Activated naive CD4-positive, alpha-beta T cell treated with anti-CD3 and anti-CD28 coated beads, Interleukin-2, amount 10 ng/mL, durations not matched to agents 7 days and 5 days (primary cell): ENCODE measurements at regions of chr16 and their contacts with region 1.

Region 1: DNA sequence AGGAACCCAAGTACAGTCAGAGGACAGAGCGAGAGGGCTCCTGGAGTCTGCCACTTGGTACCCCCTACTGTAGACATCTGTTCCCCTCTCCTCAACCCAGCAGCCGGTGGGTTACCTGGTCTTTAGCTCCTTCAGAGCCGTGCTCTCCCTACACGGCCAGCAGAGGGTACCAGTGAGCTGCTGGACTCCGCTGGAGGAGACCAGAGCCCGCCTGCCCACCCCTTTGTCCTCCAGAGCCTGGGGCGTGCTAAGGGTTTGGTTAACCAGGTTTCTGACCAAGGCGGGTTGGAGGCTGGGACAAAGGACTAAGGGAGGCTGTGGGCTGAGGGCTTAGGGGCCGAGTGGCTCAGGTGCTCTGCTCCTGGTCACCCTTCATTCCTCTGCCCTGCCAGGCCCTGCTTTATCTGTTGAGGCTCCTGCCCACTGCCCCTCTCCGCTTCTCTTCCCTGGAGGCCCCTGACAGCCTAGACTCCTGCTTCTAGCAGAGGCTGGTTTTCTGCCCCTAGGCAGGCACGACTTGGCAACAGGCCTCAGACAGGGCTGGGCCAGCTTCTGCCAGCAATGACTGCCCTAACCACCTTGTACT is 2.7 kb upstream of the HSD11B2 start:
- DNase-seq: peak; percentile 75
- H3K4me3 Mint-ChIP-seq: no peak overlapping the region
- H3K27ac Mint-ChIP-seq: no peak overlapping the region
- H3K4me1 Mint-ChIP-seq: peaks cover 10% of the 10 kb centered on the region
- H3K27me3 Mint-ChIP-seq: peaks cover 94% of the 10 kb centered on the region

Region 2: DNA sequence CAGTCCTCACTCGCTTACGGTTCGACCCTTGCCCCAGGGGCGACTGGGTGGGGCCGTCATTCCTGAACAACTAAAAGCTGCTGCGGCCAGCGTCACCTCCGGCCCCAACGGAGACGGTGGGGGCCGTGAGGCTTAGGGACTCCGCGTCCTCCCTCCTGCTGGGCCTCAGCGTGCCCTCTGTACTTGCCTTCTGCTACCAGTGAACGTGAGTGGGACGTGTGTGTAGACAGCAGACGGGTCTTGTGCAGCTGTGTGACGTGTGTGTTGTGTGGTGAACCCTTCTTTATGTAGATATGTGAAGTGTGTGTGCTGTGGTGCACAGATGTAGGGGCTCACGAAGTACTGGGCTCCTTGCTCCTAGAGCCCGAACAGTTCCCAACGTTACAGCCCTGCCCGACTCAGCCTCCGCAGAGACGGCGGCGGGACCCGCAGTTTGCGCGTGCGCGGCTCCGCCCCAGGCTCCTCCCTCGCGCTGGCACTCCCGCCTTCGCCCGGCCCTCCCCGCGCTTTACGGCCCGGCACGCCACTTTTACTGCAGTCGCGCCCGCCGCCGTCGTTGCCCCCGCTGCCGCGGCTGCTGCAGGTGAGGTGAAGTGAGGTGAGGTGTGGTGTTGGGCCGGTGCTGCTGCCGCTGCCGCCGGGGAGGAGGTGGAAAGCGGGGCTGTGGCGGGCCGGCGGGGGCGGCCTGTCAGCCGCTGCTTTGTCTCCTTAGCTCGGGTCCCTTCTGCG is 318.7 kb before region 1 on chr16 and contains the start of gene PHAF1:
- CTCF ChIA-PET with region 1: no interaction called
- DNase-seq: peak; percentile 96
- H3K4me3 Mint-ChIP-seq: peak within 1 kb of the TSS; percentile 96
- H3K27ac Mint-ChIP-seq: peak within 1 kb of the TSS; percentile 85
- H3K4me1 Mint-ChIP-seq: peaks cover 36% of the 10 kb centered on the region
- H3K27me3 Mint-ChIP-seq: peaks cover 3% of the 10 kb centered on the region

Region 3: DNA sequence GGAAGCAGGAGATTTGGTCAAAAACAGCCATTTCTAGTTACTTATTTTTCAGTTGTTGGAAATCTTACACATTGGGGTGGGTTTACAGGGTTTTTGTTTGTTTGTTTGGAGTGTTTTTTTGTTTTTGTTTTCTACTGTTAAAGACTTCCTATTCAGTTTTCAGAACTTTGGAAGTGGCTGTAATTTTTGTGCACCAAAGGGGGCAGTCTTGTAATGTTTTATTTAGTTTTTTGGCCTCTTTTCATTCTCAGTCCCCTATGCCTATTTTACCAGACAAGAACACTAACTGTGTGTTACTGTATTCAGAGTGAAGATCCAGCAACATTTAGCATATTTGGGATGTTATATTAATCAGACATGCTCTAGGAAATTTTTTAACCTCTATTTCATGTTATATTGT is 55.6 kb before region 1 on chr16:
- CTCF ChIA-PET with region 1: no interaction called
- DNase-seq: no peak
- H3K4me3 Mint-ChIP-seq: no peak overlapping the region
- H3K27ac Mint-ChIP-seq: no peak overlapping the region
- H3K4me1 Mint-ChIP-seq: no peaks in the 10 kb centered on the region
- H3K27me3 Mint-ChIP-seq: peaks cover 17% of the 10 kb centered on the region

Region 4: GRCh38 chr16:67415872-67416793 is 12.1 kb before region 1 on chr16 and contains the start of gene ZDHHC1:
- CTCF ChIA-PET with region 1: interaction called, 23 read pairs
- DNase-seq: peak; percentile 54
- H3K4me3 Mint-ChIP-seq: peak within 1 kb of the TSS; percentile 63
- H3K27ac Mint-ChIP-seq: no peak within 1 kb of the TSS
- H3K4me1 Mint-ChIP-seq: peaks cover 11% of the 10 kb centered on the region
- H3K27me3 Mint-ChIP-seq: peaks cover 83% of the 10 kb centered on the region

Region 5: GRCh38 chr16:67461600-67462592 is 33.7 kb after region 1 on chr16:
- CTCF ChIA-PET with region 1: interaction called, 49 read pairs
- DNase-seq: no peak
- H3K4me3 Mint-ChIP-seq: no peak overlapping the region
- H3K27ac Mint-ChIP-seq: peak overlapping the region; percentile 74
- H3K4me1 Mint-ChIP-seq: peaks cover 7% of the 10 kb centered on the region
- H3K27me3 Mint-ChIP-seq: no peaks in the 10 kb centered on the region

Region 6: GRCh38 chr16:67468731-67469130 is 40.5 kb after region 1 on chr16:
- CTCF ChIA-PET with region 1: interaction called, 49 read pairs
- DNase-seq: no peak
- H3K4me3 Mint-ChIP-seq: no peak overlapping the region
- H3K27ac Mint-ChIP-seq: no peak overlapping the region
- H3K4me1 Mint-ChIP-seq: peaks cover 5% of the 10 kb centered on the region
- H3K27me3 Mint-ChIP-seq: no peaks in the 10 kb centered on the region